T-cell (primary cell): ENCODE measurements at regions of chr4 and their contacts with region 1.

Region 1: GRCh38 chr4:55866973-55867574 is 13.6 kb downstream of the EXOC1 start:
- DNase-seq: peak in 14 of 35 experiments; percentile 2 to 69 (median 10)
- ATAC-seq: peak; percentile 73 to 81 (median 78)
- H3K4me3 ChIP-seq: no peak overlapping the region
- H3K4me3 Mint-ChIP-seq: no peak overlapping the region
- H3K27ac ChIP-seq: no peak overlapping the region
- H3K27ac Mint-ChIP-seq: peak overlapping the region in 1 of 2 donors; percentile 66
- H3K4me1 ChIP-seq: no peaks in the 10 kb centered on the region
- H3K4me1 Mint-ChIP-seq: peaks cover 9 to 22% (median 19%) of the 10 kb centered on the region in 3 donors
- H3K27me3 ChIP-seq: no peaks in the 10 kb centered on the region
- H3K27me3 Mint-ChIP-seq: no peaks in the 10 kb centered on the region

Region 2: DNA sequence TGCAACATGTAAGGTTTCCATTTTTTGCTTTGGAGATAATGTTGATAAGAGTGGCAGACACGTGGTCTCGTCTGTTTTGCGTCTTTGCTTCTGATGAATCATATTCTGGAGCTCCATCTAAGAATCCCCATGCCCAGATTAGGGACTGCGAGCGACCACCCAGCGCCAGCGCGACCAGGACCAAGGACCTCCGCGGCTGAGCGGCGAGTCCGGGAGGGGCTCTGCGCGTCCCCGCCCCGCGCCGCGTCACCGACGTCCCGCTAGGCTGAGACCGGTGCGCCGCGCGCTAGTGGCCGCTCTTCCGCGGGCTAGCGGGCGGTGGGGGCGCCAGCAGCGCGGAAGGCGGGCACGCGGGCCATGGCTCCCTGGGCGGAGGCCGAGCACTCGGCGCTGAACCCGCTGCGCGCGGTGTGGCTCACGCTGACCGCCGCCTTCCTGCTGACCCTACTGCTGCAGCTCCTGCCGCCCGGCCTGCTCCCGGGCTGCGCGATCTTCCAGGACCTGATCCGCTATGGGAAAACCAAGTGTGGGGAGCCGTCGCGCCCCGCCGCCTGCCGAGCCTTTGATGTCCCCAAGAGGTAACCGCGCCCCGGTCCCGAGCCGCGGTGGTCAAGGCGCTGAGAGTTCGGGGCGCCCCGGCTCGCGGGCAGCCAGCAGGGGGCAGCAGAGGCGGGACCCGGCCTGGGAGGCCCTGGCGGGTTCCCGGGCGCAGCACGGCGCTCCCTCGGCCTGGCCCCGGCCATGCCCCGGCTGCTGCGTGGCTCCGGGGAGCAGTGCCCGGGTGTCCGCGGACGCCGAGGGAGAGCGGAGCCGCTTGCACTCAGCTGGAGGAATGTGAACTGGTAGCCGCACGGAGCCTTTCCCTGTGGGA is 520.9 kb before region 1 on chr4 and contains the start of gene SRD5A3:
- CTCF ChIA-PET with region 1: interaction called in 1 of 2 experiments, 24 read pairs
- POLR2A ChIA-PET with region 1: no interaction called
- DNase-seq: peak; percentile 13 to 84 (median 65)
- ATAC-seq: peak; percentile 91 to 94 (median 92)
- H3K4me3 ChIP-seq: peak within 1 kb of the TSS; percentile 67 to 72
- H3K4me3 Mint-ChIP-seq: peak within 1 kb of the TSS; percentile 76 to 89 (median 85)
- H3K27ac ChIP-seq: peak within 1 kb of the TSS; percentile 54
- H3K27ac Mint-ChIP-seq: peak within 1 kb of the TSS; percentile 81 to 85
- H3K4me1 ChIP-seq: peaks cover 0 to 11% of the 10 kb centered on the region in 2 experiments
- H3K4me1 Mint-ChIP-seq: peaks cover 10 to 19% (median 16%) of the 10 kb centered on the region in 3 donors
- H3K27me3 ChIP-seq: no peaks in the 10 kb centered on the region
- H3K27me3 Mint-ChIP-seq: no peaks in the 10 kb centered on the region
- total RNA-seq, gene SRD5A3: 3.6 to 6.8 (median 4.1) TPM

Region 3: GRCh38 chr4:55561889-55562288 is 305.2 kb before region 1 on chr4:
- CTCF ChIA-PET with region 1: no interaction called
- POLR2A ChIA-PET with region 1: no interaction called
- DNase-seq: no peak
- ATAC-seq: no peak
- H3K4me3 ChIP-seq: no peak overlapping the region
- H3K4me3 Mint-ChIP-seq: no peak overlapping the region
- H3K27ac ChIP-seq: no peak overlapping the region
- H3K27ac Mint-ChIP-seq: no peak overlapping the region
- H3K4me1 ChIP-seq: no peaks in the 10 kb centered on the region
- H3K4me1 Mint-ChIP-seq: no peaks in the 10 kb centered on the region
- H3K27me3 ChIP-seq: no peaks in the 10 kb centered on the region
- H3K27me3 Mint-ChIP-seq: peaks cover 8 to 13% of the 10 kb centered on the region in 2 donors

Region 4: GRCh38 chr4:55853484-55854046 is 13.5 kb before region 1 on chr4 and contains the start of gene EXOC1:
- CTCF ChIA-PET with region 1: interaction called, 3 to 12 read pairs
- POLR2A ChIA-PET with region 1: no interaction called
- DNase-seq: peak; percentile 89 to 98 (median 94)
- ATAC-seq: peak; percentile 94 to 98 (median 96)
- H3K4me3 ChIP-seq: peak within 1 kb of the TSS; percentile 81 to 98
- H3K4me3 Mint-ChIP-seq: peak within 1 kb of the TSS in 2 of 3 donors; percentile 10 to 42
- H3K27ac ChIP-seq: peak within 1 kb of the TSS; percentile 58
- H3K27ac Mint-ChIP-seq: peak within 1 kb of the TSS; percentile 87 to 94
- H3K4me1 ChIP-seq: peaks cover 16% of the 10 kb centered on the region in 2 experiments
- H3K4me1 Mint-ChIP-seq: peaks cover 32 to 49% (median 44%) of the 10 kb centered on the region in 3 donors
- H3K27me3 ChIP-seq: no peaks in the 10 kb centered on the region
- H3K27me3 Mint-ChIP-seq: no peaks in the 10 kb centered on the region
- total RNA-seq, gene EXOC1: 20.8 to 37.0 (median 34.7) TPM

Region 5: GRCh38 chr4:55948726-55949474 is 81.8 kb after region 1 on chr4 and contains the start of gene CEP135:
- CTCF ChIA-PET with region 1: interaction called, 4 to 19 read pairs
- POLR2A ChIA-PET with region 1: no interaction called
- DNase-seq: peak; percentile 81 to 95 (median 88)
- ATAC-seq: peak; percentile 71 to 83 (median 80)
- H3K4me3 ChIP-seq: peak within 1 kb of the TSS; percentile 76 to 83
- H3K4me3 Mint-ChIP-seq: peak within 1 kb of the TSS; percentile 86 to 95 (median 90)
- H3K27ac ChIP-seq: peak within 1 kb of the TSS; percentile 80
- H3K27ac Mint-ChIP-seq: peak within 1 kb of the TSS; percentile 89 to 94
- H3K4me1 ChIP-seq: peaks cover 6 to 20% of the 10 kb centered on the region in 2 experiments
- H3K4me1 Mint-ChIP-seq: peaks cover 51 to 57% (median 52%) of the 10 kb centered on the region in 3 donors
- H3K27me3 ChIP-seq: no peaks in the 10 kb centered on the region
- H3K27me3 Mint-ChIP-seq: no peaks in the 10 kb centered on the region
- total RNA-seq, gene CEP135: 17.3 to 24.5 (median 21.7) TPM